ENCODE measurements at regions of chr18 and their contacts with region 1.

Region 1: GRCh38 chr18:50638884-50639420 is 79.1 kb downstream of the MAPK4 start:
- DNase-seq: no peak
- ATAC-seq: no peak
- H3K4me3 ChIP-seq: no peak overlapping the region
- H3K27ac ChIP-seq: no peak overlapping the region
- H3K4me1 ChIP-seq: no peaks in the 10 kb centered on the region
- H3K27me3 ChIP-seq: no peaks in the 10 kb centered on the region
- CTCF ChIP-seq: no peak
- EP300 ChIP-seq: no peak
- POLR2A ChIP-seq: no peak
- RAD21 ChIP-seq: no peak

Region 2: GRCh38 chr18:50656841-50657470 is 18.0 kb after region 1 on chr18:
- CTCF ChIA-PET with region 1: no interaction called
- POLR2A ChIA-PET with region 1: no interaction called
- in situ Hi-C with region 1: no loop called
- intact Hi-C with region 1: loop called (anchors 1 kb)
- DNase-seq: no peak
- ATAC-seq: no peak
- H3K4me3 ChIP-seq: no peak overlapping the region
- H3K27ac ChIP-seq: no peak overlapping the region
- H3K4me1 ChIP-seq: peaks cover 18% of the 10 kb centered on the region
- H3K27me3 ChIP-seq: peaks cover 0 to 5% of the 10 kb centered on the region in 2 experiments; a peak in 1 of 5 replicates
- CTCF ChIP-seq: no peak
- EP300 ChIP-seq: no peak
- POLR2A ChIP-seq: no peak
- RAD21 ChIP-seq: no peak

Region 3: DNA sequence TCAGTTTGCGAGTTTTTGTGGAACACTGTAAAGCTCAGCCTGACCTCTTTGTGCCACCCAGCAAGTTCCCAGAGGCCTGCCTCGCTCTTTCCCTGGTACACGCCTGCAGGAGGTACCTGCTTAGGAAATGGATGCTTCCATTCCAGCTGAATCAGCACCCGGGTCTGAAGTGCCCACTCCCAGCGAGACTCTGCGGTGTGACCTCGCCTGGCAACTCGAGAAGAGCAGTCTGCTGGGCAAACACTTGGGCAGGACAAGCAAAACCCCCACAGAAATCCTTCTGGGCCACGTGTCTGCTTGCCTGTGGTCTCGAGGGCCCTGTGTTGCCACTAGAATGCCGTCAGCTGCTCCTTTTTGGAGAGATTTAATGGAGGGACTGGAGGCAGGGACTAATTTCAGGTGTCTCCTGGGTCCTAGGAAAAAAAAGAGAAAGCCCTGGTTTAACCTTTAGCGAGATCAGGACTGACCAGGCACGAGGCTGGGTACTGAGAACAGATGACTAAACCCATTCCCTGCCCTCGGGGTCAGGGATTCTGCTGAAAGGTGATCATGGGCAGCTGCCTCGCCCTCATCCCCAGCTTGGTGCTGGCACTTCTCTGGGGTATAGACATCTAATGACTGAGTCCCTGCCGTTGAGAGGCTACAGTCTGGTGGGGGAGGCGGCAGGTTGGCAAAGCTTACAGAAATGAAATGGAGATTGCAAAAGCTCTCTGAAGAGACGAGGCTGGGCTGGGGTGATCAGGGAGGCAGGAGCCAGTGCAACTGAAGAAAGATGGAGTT is 48.7 kb after region 1 on chr18:
- CTCF ChIA-PET with region 1: no interaction called
- POLR2A ChIA-PET with region 1: no interaction called
- in situ Hi-C with region 1: no loop called
- intact Hi-C with region 1: no loop called
- DNase-seq: no peak
- ATAC-seq: no peak
- H3K4me3 ChIP-seq: no peak overlapping the region
- H3K27ac ChIP-seq: no peak overlapping the region
- H3K4me1 ChIP-seq: no peaks in the 10 kb centered on the region
- H3K27me3 ChIP-seq: peaks cover 0 to 3% of the 10 kb centered on the region in 2 experiments; a peak in 1 of 5 replicates
- CTCF ChIP-seq: no peak
- EP300 ChIP-seq: no peak
- POLR2A ChIP-seq: no peak
- RAD21 ChIP-seq: no peak

Measured in HepG2 (cell line).